GM12878 (cell line): ENCODE measurements at regions of chr5 and their contacts with region 1.

Region 1: DNA sequence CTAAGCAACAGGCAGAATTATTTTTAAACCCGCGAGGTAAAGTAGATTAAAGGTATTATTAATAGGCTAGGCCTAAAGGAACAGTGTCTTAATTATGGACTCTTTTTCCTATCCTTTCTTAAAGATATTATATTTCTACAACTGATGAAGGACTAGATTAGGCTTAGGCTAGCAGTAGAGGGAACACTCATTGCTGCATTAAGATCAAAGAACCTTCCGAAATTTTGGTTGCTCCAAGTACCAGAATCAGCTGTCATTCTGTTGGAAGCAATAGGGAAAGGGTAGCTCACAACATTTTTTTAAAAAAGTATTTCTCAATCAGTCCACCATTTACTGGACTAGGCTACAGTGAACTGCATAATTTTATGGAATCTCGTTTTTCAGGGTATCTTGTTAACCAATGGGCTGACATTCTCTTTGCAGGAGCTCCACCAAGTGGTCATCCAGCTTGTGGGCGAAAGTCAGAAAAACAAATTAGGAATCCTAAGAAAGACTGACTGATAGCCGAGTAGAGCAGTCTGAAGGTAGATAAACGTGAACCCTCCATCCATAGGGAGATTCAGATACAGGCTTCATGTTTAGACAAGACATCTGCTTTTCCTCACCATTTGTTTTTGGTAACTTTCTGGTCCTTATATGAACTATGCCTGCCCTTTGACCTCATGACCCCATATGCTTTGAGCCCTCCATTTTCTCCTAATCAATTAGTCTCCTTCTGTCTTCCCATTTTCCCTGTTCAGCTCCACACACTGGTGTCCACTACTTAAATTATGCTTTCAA is 103.6 kb upstream of the CHD1 start:
- DNase-seq: no peak
- ATAC-seq: peak; percentile 56
- H3K4me3 ChIP-seq: peak overlapping the region; percentile 33
- H3K27ac ChIP-seq: peak overlapping the region; percentile 69
- H3K4me1 ChIP-seq: peaks cover 46% of the 10 kb centered on the region
- H3K27me3 ChIP-seq: no peaks in the 10 kb centered on the region
- CTCF ChIP-seq: peak; percentile 60 to 85 (median 79)
- EP300 ChIP-seq: no peak
- POLR2A ChIP-seq: no peak
- RAD21 ChIP-seq: peak; percentile 99

Region 2: DNA sequence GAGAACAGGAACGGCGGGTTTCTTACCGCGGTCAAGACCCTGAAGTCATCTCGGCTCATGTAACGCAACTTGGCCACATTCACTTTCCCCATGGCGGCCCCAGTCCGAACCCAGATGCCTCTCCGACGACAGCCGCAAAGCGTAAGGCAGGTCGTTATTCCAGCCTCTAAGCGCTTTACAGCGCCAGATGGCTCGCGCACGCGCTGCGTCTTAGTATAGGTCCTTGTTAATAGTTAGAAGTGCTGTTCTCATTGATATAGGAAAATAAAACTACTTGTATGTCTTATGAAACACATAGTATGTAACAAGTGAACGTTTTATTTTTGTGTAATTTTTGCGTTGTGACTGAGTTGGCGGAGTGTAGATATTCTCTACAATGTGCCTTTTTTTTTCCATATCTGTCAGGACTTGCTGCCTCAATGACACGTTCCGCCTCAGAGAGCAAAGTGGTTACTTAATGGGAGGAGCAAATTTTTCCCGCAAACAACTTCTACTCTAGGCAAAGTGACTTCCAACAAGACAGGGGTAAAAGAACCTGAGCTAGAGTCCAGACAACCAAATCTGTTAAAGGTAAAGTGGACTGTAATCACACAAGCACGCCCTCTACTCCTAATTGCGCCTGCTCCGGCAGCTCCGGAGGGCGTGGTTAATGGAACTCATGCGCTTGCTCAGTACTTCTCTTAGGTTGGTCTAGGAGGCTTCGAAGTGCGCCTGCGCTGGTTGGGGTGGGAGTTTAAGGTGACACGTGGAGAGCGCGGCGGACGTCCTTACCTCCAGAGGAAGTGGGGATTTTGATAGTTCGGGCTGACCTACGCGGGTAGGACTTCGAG is 1849.1 kb before region 1 on chr5 and contains the start of gene RIOK2:
- CTCF ChIA-PET with region 1: no interaction called
- POLR2A ChIA-PET with region 1: no interaction called
- RAD21 ChIA-PET with region 1: no interaction called
- SMC1A ChIA-PET with region 1: no interaction called
- in situ Hi-C with region 1: loop called (anchors 25 kb)
- intact Hi-C with region 1: no loop called
- DNase-seq: peak; percentile 96
- ATAC-seq: peak; percentile 95
- H3K4me3 ChIP-seq: peak within 1 kb of the TSS; percentile 99
- H3K27ac ChIP-seq: peak within 1 kb of the TSS; percentile 94
- H3K4me1 ChIP-seq: peaks cover 11% of the 10 kb centered on the region
- H3K27me3 ChIP-seq: no peaks in the 10 kb centered on the region
- CTCF ChIP-seq: no peak
- EP300 ChIP-seq: peak in 1 of 2 experiments; percentile 57; a peak in 1 of 4 replicates
- POLR2A ChIP-seq: peak; percentile 86
- RAD21 ChIP-seq: no peak
- polyA plus RNA-seq, gene RIOK2: 55.9 to 59.3 TPM

Region 3: GRCh38 chr5:98839469-98840383 is 192.7 kb before region 1 on chr5:
- CTCF ChIA-PET with region 1: interaction called, 20 read pairs
- POLR2A ChIA-PET with region 1: no interaction called
- RAD21 ChIA-PET with region 1: interaction called, 5 read pairs
- SMC1A ChIA-PET with region 1: interaction called, 9 read pairs
- in situ Hi-C with region 1: no loop called
- intact Hi-C with region 1: no loop called
- DNase-seq: no peak
- ATAC-seq: peak; percentile 43; the same call in 1 of the 3 replicates
- H3K4me3 ChIP-seq: no peak overlapping the region
- H3K27ac ChIP-seq: no peak overlapping the region
- H3K4me1 ChIP-seq: no peaks in the 10 kb centered on the region
- H3K27me3 ChIP-seq: no peaks in the 10 kb centered on the region
- CTCF ChIP-seq: peak; percentile 11 to 24 (median 14); a peak in 2 of 6 replicates
- EP300 ChIP-seq: no peak
- POLR2A ChIP-seq: no peak
- RAD21 ChIP-seq: no peak

Region 4: DNA sequence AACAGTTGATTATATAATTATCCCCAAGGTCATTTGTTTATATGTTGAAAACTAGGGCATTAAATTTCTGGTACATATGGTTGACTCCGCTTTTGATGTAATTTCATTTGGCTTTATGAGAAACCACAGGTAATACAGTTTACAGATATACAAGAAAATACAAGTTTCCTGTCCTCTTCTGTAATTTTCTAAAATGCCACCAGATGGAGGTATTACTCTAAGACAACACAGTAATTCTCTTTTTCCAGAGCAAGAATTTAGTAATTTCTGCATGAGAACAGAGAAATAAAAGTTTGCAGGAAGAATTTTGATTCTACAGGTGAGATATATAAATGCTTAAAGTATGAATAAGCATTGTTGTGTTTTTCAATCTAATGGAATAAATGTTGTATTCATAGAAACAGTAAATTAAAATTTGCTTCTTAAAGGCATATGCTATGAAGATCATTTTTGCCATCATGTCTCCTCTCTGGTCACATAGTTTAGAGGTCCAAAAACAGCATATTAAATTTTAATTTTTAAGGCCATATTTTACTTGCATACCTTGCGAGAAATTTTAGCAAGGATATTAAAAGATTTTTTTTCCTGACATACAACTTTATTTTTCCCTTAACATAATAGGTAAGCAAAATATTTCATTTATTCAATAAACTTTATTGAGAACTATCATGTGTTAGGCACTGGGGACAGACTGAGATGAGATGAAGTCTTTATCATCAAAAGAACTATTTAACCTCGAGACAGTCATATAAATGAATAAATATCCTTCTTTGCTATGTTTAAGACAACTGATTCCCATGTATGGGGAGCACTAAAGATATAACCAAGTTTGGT is 126.3 kb before region 1 on chr5:
- CTCF ChIA-PET with region 1: interaction called, 46 read pairs
- POLR2A ChIA-PET with region 1: interaction called, 4 read pairs
- RAD21 ChIA-PET with region 1: interaction called, 26 read pairs
- SMC1A ChIA-PET with region 1: interaction called, 43 read pairs
- in situ Hi-C with region 1: loop called (anchors 10 kb)
- intact Hi-C with region 1: loop called (anchors 1 kb)
- DNase-seq: no peak
- ATAC-seq: peak; percentile 70
- H3K4me3 ChIP-seq: no peak overlapping the region
- H3K27ac ChIP-seq: no peak overlapping the region
- H3K4me1 ChIP-seq: no peaks in the 10 kb centered on the region; the same call in 1 of the 2 replicates
- H3K27me3 ChIP-seq: no peaks in the 10 kb centered on the region
- CTCF ChIP-seq: peak; percentile 47 to 65 (median 47); a peak in 5 of 6 replicates
- EP300 ChIP-seq: no peak
- POLR2A ChIP-seq: no peak
- RAD21 ChIP-seq: peak; percentile 92

Region 5: DNA sequence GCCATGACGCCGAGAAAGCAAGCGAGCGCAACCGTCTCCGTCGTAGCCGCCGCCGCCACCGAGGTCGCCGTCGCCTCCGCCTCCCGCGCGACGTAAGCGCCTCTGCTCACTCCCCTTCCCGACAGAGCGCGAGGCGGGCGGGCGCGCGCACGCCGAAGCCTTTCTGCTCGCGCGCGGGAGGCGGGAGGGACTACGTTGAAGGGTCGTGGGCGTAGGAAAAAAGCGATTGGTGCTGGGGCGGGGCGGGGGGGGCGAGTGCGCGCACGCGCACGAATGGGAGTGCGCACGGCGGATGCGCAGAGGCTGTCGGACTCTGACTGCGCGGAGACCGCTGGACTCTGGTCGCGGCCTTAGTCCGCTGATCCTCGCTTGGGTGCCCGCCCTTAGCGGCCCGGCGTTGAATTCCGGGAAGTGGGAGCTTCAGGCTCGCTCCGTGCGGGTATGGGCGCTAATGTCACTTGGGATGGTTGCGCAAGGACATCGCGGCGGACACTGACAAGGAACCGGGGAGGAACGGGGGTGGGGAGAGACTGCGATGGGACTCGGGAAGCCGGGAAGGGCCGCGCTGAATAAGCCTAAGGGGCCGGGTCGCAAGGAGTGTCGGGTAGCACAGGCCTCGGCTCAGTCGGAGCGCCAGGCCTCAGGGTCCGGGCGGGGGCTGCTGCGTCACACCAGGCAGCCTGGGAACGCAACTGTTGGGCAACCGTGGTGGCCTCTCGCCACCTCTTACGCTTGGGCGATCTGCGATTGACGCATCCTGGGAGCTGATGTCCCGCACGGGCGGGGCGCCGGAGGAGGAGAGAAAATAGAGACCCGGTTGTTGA is 103.3 kb before region 1 on chr5 and contains the start of gene CHD1:
- CTCF ChIA-PET with region 1: interaction called, 20 read pairs
- POLR2A ChIA-PET with region 1: interaction called, 23 read pairs
- RAD21 ChIA-PET with region 1: interaction called, 11 read pairs
- SMC1A ChIA-PET with region 1: interaction called, 39 read pairs
- in situ Hi-C with region 1: loop called (anchors 5 kb)
- intact Hi-C with region 1: loop called (anchors 1 kb)
- DNase-seq: peak; percentile 81
- ATAC-seq: peak; percentile 77
- H3K4me3 ChIP-seq: peak within 1 kb of the TSS; percentile 98
- H3K27ac ChIP-seq: peak within 1 kb of the TSS; percentile 99
- H3K4me1 ChIP-seq: peaks cover 19% of the 10 kb centered on the region
- H3K27me3 ChIP-seq: no peaks in the 10 kb centered on the region
- CTCF ChIP-seq: no peak
- EP300 ChIP-seq: peak; percentile 24 to 55; a peak in 3 of 4 replicates
- POLR2A ChIP-seq: peak; percentile 89
- RAD21 ChIP-seq: no peak
- polyA plus RNA-seq, gene CHD1: 25.5 to 32.1 TPM

Region 6: DNA sequence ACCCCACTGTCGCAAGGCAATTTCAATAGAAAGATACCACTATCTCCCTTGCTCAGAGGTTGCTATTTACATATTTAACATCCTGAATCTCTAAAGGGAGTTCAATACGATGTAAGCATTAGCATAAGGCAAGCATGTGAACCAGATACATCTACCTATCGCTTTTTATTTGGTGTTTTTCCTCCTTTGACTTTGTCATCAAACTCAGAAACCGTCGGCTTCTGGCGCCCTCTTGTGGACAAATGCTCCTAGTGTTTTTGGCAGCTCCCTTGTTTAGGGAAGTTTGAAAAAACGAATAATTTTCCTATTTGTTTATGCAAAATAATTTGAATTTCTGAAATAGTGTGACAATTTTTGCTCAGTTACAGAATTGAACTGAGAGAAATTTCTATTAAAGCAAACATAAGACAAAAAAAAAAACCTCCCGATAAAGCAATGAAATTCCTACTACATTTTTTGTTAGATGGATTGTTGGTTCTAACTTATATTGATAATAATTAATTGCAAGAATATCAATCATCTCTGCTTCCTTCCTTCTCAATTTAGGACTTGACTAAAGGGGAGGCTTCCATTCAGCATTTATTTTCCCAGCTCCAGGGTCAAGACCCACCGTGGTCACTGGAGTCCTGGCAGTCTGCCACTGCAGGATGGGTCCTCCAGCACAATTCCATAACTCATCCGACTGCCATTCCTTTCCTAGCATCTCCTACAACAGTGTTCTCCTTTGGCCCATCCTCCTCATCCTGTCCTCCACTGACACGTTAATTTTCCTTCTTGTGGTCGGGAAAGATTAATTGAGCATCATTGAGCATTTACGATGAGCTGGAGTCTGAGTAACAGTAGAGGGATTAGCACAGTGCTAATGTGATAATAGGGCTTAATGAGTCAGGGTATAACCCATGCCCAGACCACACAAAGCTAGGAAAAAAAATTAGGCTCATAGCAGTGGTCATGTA is 28.2 kb after region 1 on chr5:
- CTCF ChIA-PET with region 1: interaction called, 45 read pairs
- POLR2A ChIA-PET with region 1: interaction called, 3 read pairs
- RAD21 ChIA-PET with region 1: interaction called, 20 read pairs
- SMC1A ChIA-PET with region 1: interaction called, 41 read pairs
- in situ Hi-C with region 1: no loop called
- intact Hi-C with region 1: loop called (anchors 1 kb)
- DNase-seq: peak; percentile 34
- ATAC-seq: peak; percentile 79
- H3K4me3 ChIP-seq: peak overlapping the region; percentile 0; the same call in 1 of the 2 replicates
- H3K27ac ChIP-seq: no peak overlapping the region
- H3K4me1 ChIP-seq: peaks cover 18% of the 10 kb centered on the region
- H3K27me3 ChIP-seq: no peaks in the 10 kb centered on the region
- CTCF ChIP-seq: peak; percentile 76 to 87 (median 82)
- EP300 ChIP-seq: no peak
- POLR2A ChIP-seq: no peak
- RAD21 ChIP-seq: peak; percentile 95